Endothelial cell of umbilical vein (primary cell): ENCODE measurements at regions of chr12 and their contacts with region 1.

Region 1: DNA sequence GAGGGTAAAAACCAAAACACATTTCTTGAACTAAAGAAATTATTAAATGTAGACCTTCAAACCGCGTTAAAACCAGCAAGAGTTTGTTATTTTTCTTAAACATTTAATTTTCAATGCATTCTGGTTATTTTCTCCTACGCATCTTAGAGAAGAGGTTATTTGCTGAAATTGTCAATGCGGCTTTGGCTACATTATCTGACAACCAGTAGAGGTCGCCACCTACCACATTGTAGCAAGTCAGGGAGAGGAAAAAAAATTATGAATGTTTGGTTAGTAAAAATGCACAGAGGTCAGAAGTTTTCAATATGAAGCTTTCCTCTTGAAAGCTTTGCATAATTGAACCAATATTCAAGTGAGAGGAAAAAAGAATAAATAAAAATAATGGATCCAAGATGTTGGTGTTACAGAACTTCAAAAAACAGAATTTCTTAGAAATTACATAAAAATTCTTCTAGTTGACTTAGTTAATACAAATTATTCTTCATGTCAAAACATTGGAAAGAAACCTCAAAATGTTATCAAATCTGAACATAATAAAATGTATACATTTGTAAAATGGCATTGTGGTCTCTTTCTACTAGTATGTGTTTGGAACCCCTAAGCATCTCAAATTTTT is 159.4 kb upstream of the TMTC2 start:
- DNase-seq: peak; percentile 69
- H3K4me3 ChIP-seq: no peak overlapping the region
- H3K27ac ChIP-seq: no peak overlapping the region
- H3K4me1 ChIP-seq: no peaks in the 10 kb centered on the region
- H3K27me3 ChIP-seq: no peaks in the 10 kb centered on the region
- CTCF ChIP-seq: peak; percentile 70 to 72
- POLR2A ChIP-seq: no peak

Region 2: GRCh38 chr12:82627569-82628198 is 100.4 kb after region 1 on chr12:
- CTCF ChIA-PET with region 1: interaction called, 6 read pairs
- POLR2A ChIA-PET with region 1: no interaction called
- dilution Hi-C with region 1: no loop called
- intact Hi-C with region 1: loop called (anchors 1 kb)
- DNase-seq: peak; percentile 46
- H3K4me3 ChIP-seq: no peak overlapping the region
- H3K27ac ChIP-seq: no peak overlapping the region
- H3K4me1 ChIP-seq: no peaks in the 10 kb centered on the region
- H3K27me3 ChIP-seq: no peaks in the 10 kb centered on the region
- CTCF ChIP-seq: peak in 1 of 2 donors; percentile 47
- POLR2A ChIP-seq: no peak

Region 3: DNA sequence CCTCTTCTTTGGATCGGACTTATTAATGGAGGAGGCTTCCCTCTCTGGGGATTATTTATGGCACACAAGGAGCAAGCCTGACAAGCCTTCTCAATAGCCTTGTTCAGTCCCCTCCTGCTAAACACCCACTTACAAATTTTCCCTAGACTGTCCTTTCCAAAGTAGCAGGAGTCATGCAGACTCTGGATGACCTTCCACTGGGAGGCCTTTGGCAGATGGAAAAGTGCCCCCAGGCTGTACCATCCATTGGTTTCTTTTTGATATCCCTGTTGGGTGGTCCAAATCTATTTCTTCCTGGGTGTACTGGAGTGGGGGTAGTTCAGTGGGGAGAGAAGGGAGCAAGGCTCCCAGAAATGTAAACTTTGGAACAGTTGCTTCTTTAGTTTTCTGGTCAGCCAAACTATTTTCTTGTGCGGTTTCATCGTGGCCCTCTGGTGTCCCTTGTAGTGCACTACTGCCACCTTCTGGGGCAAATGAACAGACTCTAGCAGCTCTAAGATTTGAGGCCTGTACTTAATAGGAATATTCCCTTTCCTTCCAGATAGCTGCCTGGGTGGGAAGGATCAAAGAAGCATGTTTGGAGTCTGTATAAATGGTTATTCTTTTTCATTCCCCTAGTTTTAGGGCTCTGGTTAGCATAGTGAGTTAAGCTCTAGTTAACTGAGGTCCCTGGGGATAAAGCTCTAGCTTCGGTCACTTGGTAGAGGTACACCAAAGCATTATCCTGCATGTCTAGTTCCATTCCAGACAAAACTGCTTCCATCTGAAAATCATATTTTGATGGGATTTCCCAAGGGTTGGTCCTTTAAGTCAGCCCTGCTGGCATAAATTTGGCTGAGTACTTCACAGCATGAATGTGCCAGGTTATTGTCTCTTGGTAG is 1975.9 kb after region 1 on chr12:
- CTCF ChIA-PET with region 1: interaction called, 6 read pairs
- POLR2A ChIA-PET with region 1: no interaction called
- dilution Hi-C with region 1: no loop called
- intact Hi-C with region 1: loop called (anchors 1 kb)
- DNase-seq: peak; percentile 45
- H3K4me3 ChIP-seq: no peak overlapping the region
- H3K27ac ChIP-seq: no peak overlapping the region
- H3K4me1 ChIP-seq: peaks cover 8% of the 10 kb centered on the region
- H3K27me3 ChIP-seq: no peaks in the 10 kb centered on the region
- CTCF ChIP-seq: peak; percentile 42 to 56
- POLR2A ChIP-seq: no peak